HEK293T (cell line): ENCODE measurements at regions of chr20 and their contacts with region 1.

Region 1: GRCh38 chr20:25065625-25066338 is 7.8 kb upstream of the ACSS1 start:
- DNase-seq: peak; percentile 54

Region 2: DNA sequence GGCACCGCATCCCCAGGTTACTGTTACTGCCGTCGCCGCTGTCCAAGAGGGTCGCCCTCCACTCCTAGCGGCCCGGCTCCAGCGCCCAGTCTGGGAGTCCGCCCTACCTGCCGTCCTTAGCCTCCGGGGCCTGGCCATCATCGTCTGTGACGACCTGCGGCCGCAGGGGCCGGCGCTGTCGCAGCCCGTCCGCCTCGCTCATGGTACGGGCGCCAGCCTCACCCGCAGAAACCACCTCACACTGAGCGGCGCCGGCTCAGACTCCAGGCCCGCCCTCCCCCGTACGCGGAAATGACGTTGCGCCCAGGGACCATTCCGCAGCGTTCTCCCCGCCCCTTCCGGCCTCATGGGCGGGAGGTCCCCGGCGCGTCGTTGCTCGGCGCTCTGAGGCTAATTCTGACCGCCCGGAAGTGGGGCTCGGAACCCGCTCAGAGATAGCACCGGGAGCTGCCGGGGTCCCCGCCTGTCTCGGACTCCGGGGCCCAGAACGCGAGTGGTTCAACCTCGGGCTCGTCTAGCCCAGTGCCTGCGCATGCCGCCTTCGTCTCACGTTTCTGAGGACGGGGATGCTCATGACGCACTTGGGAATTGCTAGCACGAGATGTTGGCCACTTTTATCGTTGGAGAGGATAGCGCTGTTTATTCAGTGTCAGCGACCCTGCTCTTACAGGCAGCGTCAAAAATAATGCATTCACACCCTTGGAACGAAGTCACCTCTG is 73.1 kb before region 1 on chr20 and contains the start of gene APMAP:
- CTCF ChIA-PET with region 1: interaction called, 33 read pairs
- POLR2A ChIA-PET with region 1: interaction called, 4 read pairs
- DNase-seq: peak; percentile 94